ENCODE measurements at regions of chr17 and their contacts with region 1.

Region 1: GRCh38 chr17:75673487-75673886 is 6.3 kb downstream of the SAP30BP start:
- H3K4me3 ChIP-seq: no peak overlapping the region
- H3K27ac ChIP-seq: no peak overlapping the region
- H3K4me1 ChIP-seq: no peaks in the 10 kb centered on the region
- CTCF ChIP-seq: no peak

Region 2: DNA sequence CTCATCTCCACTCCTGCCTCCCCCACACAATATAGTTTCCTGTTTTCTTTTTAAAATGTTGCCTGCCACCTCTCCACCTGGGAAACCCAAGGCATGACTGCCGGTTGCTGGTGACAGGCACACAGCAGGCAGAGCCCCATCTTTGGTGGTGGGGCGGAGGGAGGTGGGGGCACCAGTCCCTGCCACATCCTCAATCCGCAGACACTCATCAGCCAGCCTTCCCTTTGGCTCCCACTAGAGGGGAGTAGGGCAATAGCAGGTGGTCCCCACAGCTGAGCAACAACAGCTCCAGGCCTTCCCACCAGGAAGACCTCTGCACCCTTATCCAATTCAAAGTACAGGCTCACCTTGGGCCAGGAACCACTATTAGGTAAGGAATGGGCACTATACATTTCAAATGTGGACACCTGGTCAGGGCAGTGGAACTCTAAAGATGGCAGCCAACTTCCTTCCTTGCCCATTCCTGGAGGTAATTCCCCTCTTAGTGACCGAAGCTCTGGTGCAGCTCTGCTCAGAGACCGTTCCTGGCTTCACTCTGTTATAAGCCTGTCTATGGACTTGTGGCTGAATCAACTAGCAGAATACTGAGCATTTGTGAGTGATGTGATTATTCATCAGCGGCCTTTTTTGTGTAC is 20.5 kb before region 1 on chr17:
- CTCF ChIA-PET with region 1: interaction called, 16 read pairs
- POLR2A ChIA-PET with region 1: no interaction called
- H3K4me3 ChIP-seq: no peak overlapping the region
- H3K27ac ChIP-seq: no peak overlapping the region
- H3K4me1 ChIP-seq: no peaks in the 10 kb centered on the region
- CTCF ChIP-seq: peak; percentile 71

Region 3: DNA sequence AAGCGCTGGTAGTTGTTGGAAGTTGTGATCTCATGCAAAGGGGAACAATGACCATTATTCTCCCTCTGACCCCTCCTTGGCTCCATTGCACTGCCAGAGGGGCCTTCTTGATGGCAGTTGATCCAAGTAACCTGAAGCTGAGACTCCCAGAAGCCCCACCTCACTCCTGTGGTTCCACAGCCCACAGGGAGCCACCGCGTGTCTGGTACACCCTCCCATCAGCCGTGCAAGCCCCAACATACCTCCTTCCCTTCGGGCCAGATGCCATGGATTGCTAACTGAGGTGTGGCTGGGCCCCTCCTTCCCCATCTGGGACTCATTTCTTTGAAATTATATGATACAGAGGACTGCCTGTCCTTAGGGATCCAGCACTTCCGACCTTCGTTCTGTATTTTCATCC is 11.4 kb after region 1 on chr17:
- CTCF ChIA-PET with region 1: interaction called, 18 read pairs
- POLR2A ChIA-PET with region 1: no interaction called
- H3K4me3 ChIP-seq: no peak overlapping the region
- H3K27ac ChIP-seq: no peak overlapping the region
- H3K4me1 ChIP-seq: peaks cover 4% of the 10 kb centered on the region; the same call in 1 of the 2 replicates
- CTCF ChIP-seq: no peak

Measured in HEK293 (cell line).